CD4-positive, alpha-beta T cell (primary cell): ENCODE measurements at regions of chr19 and their contacts with region 1.

Region 1: GRCh38 chr19:34345947-34346351 is 19.0 kb upstream of the GPI start:
- DNase-seq: peak; percentile 50 to 80 (median 62)
- ATAC-seq: no peak
- H3K4me3 ChIP-seq: no peak overlapping the region
- H3K4me3 Mint-ChIP-seq: no peak overlapping the region
- H3K27ac ChIP-seq: no peak overlapping the region
- H3K27ac Mint-ChIP-seq: peak overlapping the region; percentile 38
- H3K4me1 ChIP-seq: peaks cover 22% of the 10 kb centered on the region
- H3K4me1 Mint-ChIP-seq: peaks cover 23% of the 10 kb centered on the region
- H3K27me3 ChIP-seq: no peaks in the 10 kb centered on the region
- H3K27me3 Mint-ChIP-seq: no peaks in the 10 kb centered on the region
- CTCF ChIP-seq: peak; percentile 92

Region 2: DNA sequence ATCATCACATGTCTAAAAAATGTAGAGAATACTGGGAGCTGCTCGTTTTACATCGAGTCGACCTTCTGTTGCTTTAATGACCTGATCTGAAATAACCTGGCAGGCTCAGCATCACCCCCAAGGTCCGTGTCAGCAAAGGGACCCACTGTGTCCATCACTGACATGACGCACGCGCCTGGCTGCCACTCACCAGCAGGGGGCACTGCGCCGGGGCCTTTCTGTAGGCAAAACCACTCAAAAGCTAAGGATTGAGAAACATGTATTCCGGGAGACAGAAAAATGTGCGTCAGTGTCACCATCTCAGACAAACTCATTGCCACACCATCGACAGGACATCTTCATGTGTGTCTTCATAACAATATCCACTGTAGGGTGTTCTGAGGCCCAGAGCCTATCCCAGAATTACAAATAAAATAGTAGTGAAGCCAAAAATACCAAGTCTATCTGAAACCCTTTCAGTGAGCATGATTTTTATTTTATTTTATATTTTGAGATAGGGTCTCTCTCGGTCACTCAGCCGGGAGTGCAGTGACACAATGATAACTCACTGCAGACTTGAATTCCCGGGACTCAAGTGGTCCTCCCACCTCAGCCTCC is 303.9 kb before region 1 on chr19:
- CTCF ChIA-PET with region 1: no interaction called
- POLR2A ChIA-PET with region 1: no interaction called
- intact Hi-C with region 1: loop called in 1 of 2 experiments (anchors 5 kb)
- DNase-seq: peak; percentile 51 to 79 (median 60)
- ATAC-seq: no peak
- H3K4me3 ChIP-seq: no peak overlapping the region
- H3K4me3 Mint-ChIP-seq: no peak overlapping the region
- H3K27ac ChIP-seq: no peak overlapping the region
- H3K27ac Mint-ChIP-seq: no peak overlapping the region
- H3K4me1 ChIP-seq: no peaks in the 10 kb centered on the region
- H3K4me1 Mint-ChIP-seq: no peaks in the 10 kb centered on the region
- H3K27me3 ChIP-seq: peaks cover 0 to 2% of the 10 kb centered on the region in 2 experiments
- H3K27me3 Mint-ChIP-seq: peaks cover 34% of the 10 kb centered on the region
- CTCF ChIP-seq: peak; percentile 83

Region 3: DNA sequence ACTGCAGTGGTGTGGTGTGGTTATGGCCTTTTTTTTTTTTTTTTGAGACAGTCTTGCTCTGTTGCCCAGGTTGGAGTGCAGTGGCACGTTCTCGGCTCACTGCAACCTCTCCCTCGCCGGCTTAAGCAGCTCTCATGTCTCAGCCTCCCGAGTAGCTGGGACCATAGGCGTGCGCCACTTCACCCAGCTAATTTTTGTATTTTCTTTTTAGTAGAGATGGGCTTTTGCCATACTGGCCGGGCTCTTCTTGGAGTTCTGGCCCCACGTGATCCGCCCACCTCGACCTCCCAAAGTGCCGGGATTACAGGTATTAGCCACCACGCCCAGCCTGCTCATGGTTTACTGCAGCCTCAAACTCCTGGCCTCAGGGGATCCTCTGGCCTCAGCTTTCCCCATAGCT is 65.3 kb after region 1 on chr19:
- CTCF ChIA-PET with region 1: no interaction called
- POLR2A ChIA-PET with region 1: no interaction called
- intact Hi-C with region 1: no loop called
- DNase-seq: no peak
- ATAC-seq: no peak
- H3K4me3 ChIP-seq: no peak overlapping the region
- H3K4me3 Mint-ChIP-seq: no peak overlapping the region
- H3K27ac ChIP-seq: no peak overlapping the region
- H3K27ac Mint-ChIP-seq: no peak overlapping the region
- H3K4me1 ChIP-seq: no peaks in the 10 kb centered on the region
- H3K4me1 Mint-ChIP-seq: peaks cover 11% of the 10 kb centered on the region
- H3K27me3 ChIP-seq: no peaks in the 10 kb centered on the region
- H3K27me3 Mint-ChIP-seq: no peaks in the 10 kb centered on the region
- CTCF ChIP-seq: no peak

Region 4: DNA sequence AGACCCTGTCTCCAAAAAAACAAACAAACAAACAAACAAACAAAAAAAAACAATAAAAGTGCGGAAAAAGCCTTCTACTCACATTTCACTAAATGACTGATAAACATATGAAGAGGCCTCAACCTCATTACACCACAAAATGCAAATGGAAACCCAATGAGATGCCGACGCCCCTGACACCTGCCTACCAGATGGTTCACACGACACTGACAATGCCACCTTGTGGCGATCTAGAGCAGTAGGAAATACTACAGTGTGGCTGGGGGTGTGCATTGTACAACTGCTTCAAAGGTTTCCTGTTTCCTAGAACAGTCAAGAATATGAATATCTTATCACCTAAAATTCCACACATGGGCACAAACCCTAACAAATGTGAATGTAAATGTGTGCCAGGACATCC is 317.0 kb after region 1 on chr19:
- CTCF ChIA-PET with region 1: no interaction called
- POLR2A ChIA-PET with region 1: no interaction called
- intact Hi-C with region 1: no loop called
- DNase-seq: peak in 11 of 14 experiments; percentile 7 to 78 (median 42)
- ATAC-seq: peak; percentile 100
- H3K4me3 ChIP-seq: no peak overlapping the region
- H3K4me3 Mint-ChIP-seq: no peak overlapping the region
- H3K27ac ChIP-seq: no peak overlapping the region
- H3K27ac Mint-ChIP-seq: peak overlapping the region; percentile 8
- H3K4me1 ChIP-seq: peaks cover 23% of the 10 kb centered on the region
- H3K4me1 Mint-ChIP-seq: peaks cover 31% of the 10 kb centered on the region
- H3K27me3 ChIP-seq: no peaks in the 10 kb centered on the region
- H3K27me3 Mint-ChIP-seq: peaks cover 3% of the 10 kb centered on the region
- CTCF ChIP-seq: peak; percentile 63